RWPE1 (cell line): ENCODE measurements at regions of chr6 and their contacts with region 1.

Region 1: DNA sequence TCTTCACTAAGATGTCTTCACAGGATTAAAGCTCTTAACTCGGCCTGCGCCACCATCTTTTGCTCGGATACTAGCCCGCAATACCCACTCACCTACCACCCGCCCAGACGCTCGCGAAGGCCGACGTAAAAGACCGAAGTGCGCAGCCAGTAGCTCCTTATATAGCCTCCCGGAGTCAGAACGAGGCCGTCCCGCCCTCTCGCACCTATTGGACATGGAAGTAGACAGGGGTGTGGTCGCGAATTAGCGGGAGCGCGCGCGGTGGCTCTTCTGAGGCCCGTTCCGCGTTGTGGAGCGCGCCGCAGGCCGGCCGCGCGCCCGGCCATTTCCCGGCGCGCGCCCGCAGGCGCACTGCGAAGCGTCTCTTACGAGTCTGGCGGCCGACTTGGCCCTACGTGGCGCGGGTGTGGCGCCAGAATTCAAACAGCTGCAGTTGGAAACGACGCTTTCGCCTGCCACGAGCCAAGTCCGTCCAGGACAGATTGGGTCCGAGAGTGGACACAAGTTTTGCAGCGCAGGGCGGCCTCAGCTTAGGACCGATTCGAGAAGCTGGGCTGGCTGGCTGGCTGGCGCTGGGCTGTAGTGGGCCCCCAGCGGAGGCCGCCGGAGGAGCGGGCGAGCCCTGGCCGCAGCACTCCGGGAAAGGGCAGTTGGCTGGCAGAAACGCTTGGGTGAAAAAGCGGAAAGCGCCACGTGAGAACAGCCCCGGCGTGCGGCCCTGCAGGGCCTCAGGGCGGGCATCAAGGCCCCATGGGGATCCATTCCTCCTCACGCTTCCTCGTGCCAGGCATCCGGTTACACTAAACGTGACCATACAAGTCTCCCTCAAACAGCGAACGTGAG is 36.1 kb upstream of the SYNCRIP start:
- DNase-seq: peak; percentile 95
- H3K27ac ChIP-seq: peak overlapping the region; percentile 99
- CTCF ChIP-seq: no peak

Region 2: DNA sequence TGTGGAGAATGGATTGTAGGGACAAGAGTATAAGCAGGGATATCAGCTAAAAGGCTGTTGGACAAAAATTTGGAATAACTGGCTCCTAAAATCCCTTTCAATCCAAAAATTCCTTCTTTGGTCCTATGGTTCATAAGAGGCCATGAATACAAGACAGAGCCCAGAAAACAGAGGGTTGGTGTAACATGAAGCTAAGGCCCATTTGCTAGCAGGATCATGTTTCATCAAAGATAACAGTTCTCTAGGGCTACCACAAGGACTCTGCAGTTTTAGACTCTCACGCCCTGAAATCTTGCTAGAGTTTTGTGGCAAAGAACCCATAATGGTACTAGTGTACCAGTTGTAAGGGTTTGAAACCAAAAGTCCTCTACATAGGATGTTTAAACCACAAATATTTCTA is 586.6 kb before region 1 on chr6:
- CTCF ChIA-PET with region 1: no interaction called
- POLR2A ChIA-PET with region 1: no interaction called
- DNase-seq: no peak
- H3K27ac ChIP-seq: no peak overlapping the region
- CTCF ChIP-seq: no peak

Region 3: GRCh38 chr6:85642774-85643536 is 35.9 kb before region 1 on chr6 and contains the start of gene SYNCRIP:
- CTCF ChIA-PET with region 1: no interaction called
- POLR2A ChIA-PET with region 1: interaction called, 37 read pairs
- DNase-seq: peak; percentile 95
- H3K27ac ChIP-seq: peak within 1 kb of the TSS; percentile 100
- CTCF ChIP-seq: no peak

Region 4: DNA sequence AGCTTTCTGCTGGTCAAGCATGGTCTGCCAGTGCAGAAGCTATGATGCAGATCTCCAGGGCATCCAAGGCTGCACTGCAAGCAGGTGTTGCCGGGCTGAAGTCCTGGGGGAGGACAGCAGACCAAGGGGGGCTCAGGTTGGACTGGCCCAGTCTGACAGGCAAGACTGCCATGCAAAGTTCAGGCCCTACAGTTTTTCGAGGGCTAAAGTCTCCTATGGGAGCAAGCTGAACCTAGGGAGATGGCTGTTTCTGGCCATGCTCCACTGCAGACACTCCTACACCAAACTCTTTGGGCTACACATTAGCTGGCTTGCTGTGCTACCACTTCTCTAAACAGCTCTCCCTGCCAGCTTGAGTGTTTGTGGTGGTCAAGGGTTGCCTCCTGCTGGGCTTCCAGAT is 93.8 kb after region 1 on chr6:
- CTCF ChIA-PET with region 1: no interaction called
- POLR2A ChIA-PET with region 1: no interaction called
- DNase-seq: no peak
- H3K27ac ChIP-seq: no peak overlapping the region
- CTCF ChIP-seq: no peak